ENCODE measurements at regions of chr3 and their contacts with region 1.

Region 1: DNA sequence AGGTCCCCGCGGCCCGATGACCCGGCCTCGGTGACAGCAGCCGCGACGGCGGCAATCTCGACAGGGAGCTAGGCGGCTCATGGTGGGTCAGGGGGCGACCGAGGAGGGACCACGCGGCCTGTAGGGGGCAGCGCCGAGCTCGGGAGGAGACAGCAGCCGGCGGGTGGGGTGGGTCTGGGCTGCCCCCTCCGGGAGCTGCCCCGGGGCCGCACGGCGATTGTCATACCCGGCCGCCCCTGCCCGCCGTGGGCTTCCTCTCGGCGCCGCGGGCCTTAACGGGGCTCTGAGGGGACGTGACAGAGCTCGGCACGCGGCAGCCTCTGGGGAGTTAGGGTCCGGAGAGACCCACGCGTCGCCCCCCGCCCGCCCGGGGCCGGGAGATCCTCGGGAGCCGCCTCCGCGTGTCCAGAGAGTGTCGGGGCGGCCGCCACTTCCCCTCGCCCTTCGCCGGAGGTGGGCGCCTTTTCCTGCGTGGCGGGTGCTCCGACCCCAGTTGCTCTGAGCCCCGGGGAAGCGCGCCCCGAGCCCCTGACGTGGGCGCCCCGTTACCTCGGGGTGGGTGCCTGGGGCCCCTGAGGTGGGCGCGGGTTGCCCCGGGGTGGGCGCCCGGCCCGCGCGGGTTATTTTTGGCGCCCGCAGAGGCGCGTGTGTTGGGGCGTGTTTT is 539 bp upstream of the PLCL2 start:
- DNase-seq: peak; percentile 89
- H3K4me3 Mint-ChIP-seq: peak overlapping the region; percentile 92
- H3K27ac Mint-ChIP-seq: peak overlapping the region; percentile 98
- H3K4me1 Mint-ChIP-seq: peaks cover 32% of the 10 kb centered on the region
- H3K27me3 Mint-ChIP-seq: peaks cover 10% of the 10 kb centered on the region

Region 2: DNA sequence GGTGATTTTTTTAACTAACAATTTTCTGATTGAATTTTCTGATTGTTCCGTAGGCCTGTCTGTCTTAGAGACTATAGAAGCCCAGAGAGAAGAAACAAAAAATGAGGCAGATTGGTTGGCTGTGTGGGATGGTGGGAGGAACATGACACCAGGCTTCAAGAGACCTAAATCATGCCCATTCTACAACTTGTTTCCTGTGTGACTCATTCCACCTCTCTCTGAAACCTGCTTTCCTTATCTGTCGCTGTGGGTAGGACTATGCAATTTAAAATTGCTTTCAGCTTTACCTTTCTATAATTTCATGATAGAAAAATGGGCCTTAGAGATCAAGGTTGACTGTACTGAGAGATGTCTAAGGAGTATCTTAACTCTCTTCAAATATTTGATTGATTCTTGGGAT is 574.7 kb before region 1 on chr3:
- intact Hi-C with region 1: loop called (anchors 10 kb)
- DNase-seq: peak; percentile 87
- H3K4me3 Mint-ChIP-seq: peak overlapping the region; percentile 61
- H3K27ac Mint-ChIP-seq: peak overlapping the region; percentile 89
- H3K4me1 Mint-ChIP-seq: peaks cover 80% of the 10 kb centered on the region
- H3K27me3 Mint-ChIP-seq: no peaks in the 10 kb centered on the region

Region 3: DNA sequence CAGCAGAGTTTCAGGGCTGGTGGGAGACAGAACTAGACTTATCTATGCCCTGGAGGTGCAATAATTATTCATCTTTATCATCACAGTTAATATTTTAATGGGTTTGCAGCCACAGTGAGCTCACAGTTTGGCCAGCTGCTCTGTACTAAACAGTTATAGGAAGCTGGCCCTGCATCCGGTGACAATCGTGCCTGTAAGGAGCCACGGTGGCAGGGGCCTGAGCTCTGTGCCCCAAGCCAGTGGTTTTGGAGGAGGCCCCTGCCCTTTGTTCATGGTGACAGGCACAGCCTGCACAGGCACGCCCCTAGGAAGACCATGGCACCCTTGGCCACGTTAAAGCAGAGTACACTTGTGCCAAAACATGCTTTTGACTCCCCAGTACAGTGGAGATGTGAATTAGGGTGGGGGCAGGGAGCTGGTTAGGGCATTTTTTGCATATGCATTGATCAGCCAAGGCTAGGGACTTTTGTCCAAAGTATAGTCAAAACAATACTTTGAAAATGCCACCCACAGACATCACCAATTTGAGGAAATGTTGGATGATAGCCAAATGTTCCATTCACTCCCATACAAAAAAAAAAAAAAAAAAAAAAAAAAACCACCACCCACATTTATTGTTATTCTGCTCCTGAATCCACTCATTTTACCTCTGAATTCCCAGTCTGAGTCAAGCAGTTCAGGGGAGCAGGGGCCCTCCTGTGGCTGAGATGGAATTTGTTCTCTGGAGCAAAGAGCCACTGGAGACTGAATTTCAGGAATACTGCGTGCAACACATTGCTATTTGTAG is 367.3 kb before region 1 on chr3:
- intact Hi-C with region 1: no loop called
- DNase-seq: peak; percentile 76
- H3K4me3 Mint-ChIP-seq: peak overlapping the region; percentile 51
- H3K27ac Mint-ChIP-seq: peak overlapping the region; percentile 84
- H3K4me1 Mint-ChIP-seq: peaks cover 56% of the 10 kb centered on the region
- H3K27me3 Mint-ChIP-seq: no peaks in the 10 kb centered on the region

Region 4: GRCh38 chr3:16687217-16687616 is 197.0 kb before region 1 on chr3:
- intact Hi-C with region 1: no loop called
- DNase-seq: no peak
- H3K4me3 Mint-ChIP-seq: no peak overlapping the region
- H3K27ac Mint-ChIP-seq: no peak overlapping the region
- H3K4me1 Mint-ChIP-seq: no peaks in the 10 kb centered on the region
- H3K27me3 Mint-ChIP-seq: no peaks in the 10 kb centered on the region

Region 5: DNA sequence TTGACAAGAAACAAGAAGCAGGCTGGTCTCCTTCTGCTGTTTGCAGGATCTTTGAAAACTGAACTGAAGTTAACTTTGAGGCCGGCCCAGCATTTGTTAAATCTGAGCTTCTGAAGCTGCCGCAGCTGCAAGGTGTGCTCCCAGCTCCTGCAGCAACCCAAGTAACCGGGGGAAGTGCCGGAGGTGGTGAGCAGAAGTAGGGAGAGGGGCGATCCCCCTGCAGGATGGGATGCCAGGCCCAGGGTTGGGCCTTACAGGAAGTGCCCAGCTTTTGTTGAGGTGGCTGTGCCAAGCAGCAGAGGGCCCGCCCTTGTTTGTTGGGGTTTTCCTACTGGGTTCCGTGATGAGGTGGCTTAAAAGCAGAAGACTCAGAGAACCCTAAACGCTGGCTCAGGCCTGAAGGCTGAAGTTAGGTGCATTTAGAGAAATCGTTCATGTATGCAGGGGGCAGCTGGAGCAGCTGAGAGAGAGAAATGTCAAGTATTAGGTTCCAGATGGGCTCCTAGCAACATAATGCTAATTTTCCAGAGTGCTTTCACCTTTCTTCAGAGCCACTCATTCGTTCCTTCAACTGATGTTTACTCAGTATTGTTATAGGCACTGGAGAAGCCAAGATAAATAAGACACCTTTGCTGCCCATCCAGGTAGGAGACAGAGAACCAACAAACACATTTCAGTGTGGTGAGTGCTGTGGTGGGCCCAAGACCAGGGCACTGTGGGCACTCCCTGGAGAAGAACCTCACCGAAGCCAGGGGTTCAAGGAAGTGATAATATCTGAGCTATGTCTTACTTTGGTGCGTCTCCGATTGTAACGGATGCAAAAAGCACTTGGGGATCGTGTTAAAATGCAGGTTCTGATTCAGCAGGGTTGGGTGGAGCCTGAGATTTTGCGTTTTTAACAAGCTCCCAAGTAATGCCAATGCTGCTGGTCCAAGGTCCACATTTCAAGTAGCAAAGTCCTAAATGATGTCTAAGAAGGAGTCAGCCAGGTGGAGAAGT is 41.6 kb before region 1 on chr3:
- intact Hi-C with region 1: loop called (anchors 1 kb)
- DNase-seq: peak; percentile 92
- H3K4me3 Mint-ChIP-seq: peak overlapping the region; percentile 82
- H3K27ac Mint-ChIP-seq: peak overlapping the region; percentile 99
- H3K4me1 Mint-ChIP-seq: peaks cover 60% of the 10 kb centered on the region
- H3K27me3 Mint-ChIP-seq: no peaks in the 10 kb centered on the region

Region 6: DNA sequence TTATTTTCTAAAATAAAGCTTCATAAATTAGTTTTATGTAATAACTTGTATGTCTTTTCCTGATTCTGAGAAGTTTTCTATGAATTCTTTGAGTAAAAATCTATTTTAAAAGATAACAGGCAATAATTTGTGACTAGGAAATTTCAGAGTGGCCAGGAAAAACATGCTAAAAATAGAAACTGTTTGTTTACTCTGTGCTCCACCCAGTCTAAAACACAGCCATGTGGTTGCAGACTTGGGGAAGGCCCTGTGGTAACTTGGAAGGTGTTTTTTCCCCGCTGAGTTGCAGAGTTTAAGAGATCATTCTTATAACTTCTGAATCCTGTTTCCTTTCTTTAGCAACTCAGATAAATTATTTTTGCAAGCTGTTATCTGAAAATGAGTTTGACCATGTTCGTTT is 22.5 kb after region 1 on chr3:
- intact Hi-C with region 1: loop called (anchors 2 kb)
- DNase-seq: peak; percentile 75
- H3K4me3 Mint-ChIP-seq: peak overlapping the region; percentile 38
- H3K27ac Mint-ChIP-seq: no peak overlapping the region
- H3K4me1 Mint-ChIP-seq: peaks cover 61% of the 10 kb centered on the region
- H3K27me3 Mint-ChIP-seq: no peaks in the 10 kb centered on the region

Region 7: DNA sequence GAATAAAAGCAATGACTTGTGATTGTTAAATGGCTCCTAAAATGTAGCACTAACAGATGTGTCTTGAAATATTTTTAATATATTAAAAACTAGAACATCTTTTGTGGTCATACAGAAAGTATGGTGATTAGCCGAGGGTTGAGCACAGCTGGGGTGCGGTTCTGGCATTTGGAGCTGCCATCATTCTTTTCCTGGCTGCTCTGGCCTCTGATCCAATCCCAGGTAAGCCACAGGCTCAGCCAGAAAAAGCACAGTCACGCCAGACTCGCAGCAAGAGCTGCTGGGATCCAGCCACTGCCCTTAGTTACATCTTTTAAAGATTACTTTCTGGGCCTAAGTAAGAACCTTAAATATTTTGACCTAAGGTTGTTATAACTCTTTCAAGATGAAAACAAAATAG is 197.3 kb after region 1 on chr3:
- intact Hi-C with region 1: loop called (anchors 5 kb)
- DNase-seq: peak; percentile 37
- H3K4me3 Mint-ChIP-seq: no peak overlapping the region
- H3K27ac Mint-ChIP-seq: no peak overlapping the region
- H3K4me1 Mint-ChIP-seq: peaks cover 48% of the 10 kb centered on the region
- H3K27me3 Mint-ChIP-seq: no peaks in the 10 kb centered on the region

Region 8: GRCh38 chr3:17233398-17233800 is 349.2 kb after region 1 on chr3:
- intact Hi-C with region 1: loop called (anchors 1 kb)
- DNase-seq: peak; percentile 84
- H3K4me3 Mint-ChIP-seq: no peak overlapping the region
- H3K27ac Mint-ChIP-seq: no peak overlapping the region
- H3K4me1 Mint-ChIP-seq: peaks cover 12% of the 10 kb centered on the region
- H3K27me3 Mint-ChIP-seq: no peaks in the 10 kb centered on the region

Region 9: DNA sequence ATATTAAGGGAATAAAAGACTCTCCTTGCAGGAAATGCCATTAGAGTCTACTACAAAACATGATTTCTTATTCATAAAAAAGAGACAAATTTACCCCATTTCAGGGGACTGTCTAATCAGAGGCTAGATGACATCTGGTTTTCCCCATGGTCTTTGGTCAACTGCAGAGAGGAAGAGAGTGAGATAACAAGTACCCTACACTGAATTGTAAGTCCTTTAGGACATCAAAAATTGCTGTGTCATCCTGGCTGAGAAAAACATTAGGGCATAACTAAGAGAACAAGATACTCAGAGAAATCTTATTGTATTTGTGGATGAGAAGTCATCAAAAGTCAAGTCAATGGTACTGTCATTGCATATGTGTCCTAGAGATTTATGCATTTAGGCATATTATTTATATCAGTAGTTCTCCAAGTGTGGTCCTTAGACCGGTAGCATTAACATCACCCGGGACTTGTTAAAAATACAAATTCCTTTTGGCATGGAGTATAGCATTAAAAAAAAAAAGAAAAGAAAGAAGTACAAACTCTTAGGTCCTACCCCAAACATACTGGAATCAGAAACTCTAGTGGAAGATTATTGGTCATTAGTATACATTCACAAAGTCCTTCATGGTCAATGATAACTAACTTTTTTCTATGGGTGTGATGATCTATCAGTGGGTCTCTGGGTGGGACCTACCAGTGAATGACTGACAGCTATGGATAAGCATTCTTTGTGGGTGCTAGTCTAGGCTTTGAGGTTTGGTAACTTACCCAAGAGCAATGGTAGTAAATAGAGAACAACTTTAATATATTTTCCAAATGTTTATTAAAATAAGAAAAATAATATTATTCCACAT is 887.2 kb after region 1 on chr3:
- intact Hi-C with region 1: no loop called
- DNase-seq: peak; percentile 25
- H3K4me3 Mint-ChIP-seq: no peak overlapping the region
- H3K27ac Mint-ChIP-seq: no peak overlapping the region
- H3K4me1 Mint-ChIP-seq: peaks cover 17% of the 10 kb centered on the region
- H3K27me3 Mint-ChIP-seq: peaks cover 14% of the 10 kb centered on the region